ENCODE measurements at regions of chr12 and their contacts with region 1.

Region 1: GRCh38 chr12:76586764-76587395 is 27.3 kb upstream of the OSBPL8 start:
- DNase-seq: peak in 4 of 5 donors; percentile 59 to 63 (median 60)
- H3K4me3 ChIP-seq: no peak overlapping the region
- H3K4me3 Mint-ChIP-seq: no peak overlapping the region
- H3K27ac ChIP-seq: no peak overlapping the region
- H3K27ac Mint-ChIP-seq: peak overlapping the region in 2 of 7 donors; percentile 46 to 83
- H3K4me1 ChIP-seq: no peaks in the 10 kb centered on the region
- H3K4me1 Mint-ChIP-seq: peaks cover 0 to 3% (median 0%) of the 10 kb centered on the region in 4 donors
- H3K27me3 ChIP-seq: no peaks in the 10 kb centered on the region
- H3K27me3 Mint-ChIP-seq: no peaks in the 10 kb centered on the region

Region 2: GRCh38 chr12:75526655-75527511 is 1060.0 kb before region 1 on chr12:
- CTCF ChIA-PET with region 1: interaction called, 20 read pairs
- POLR2A ChIA-PET with region 1: no interaction called
- intact Hi-C with region 1: loop called (anchors 1 kb)
- DNase-seq: peak in 4 of 5 donors; percentile 32 to 42 (median 40)
- H3K4me3 ChIP-seq: no peak overlapping the region
- H3K4me3 Mint-ChIP-seq: no peak overlapping the region
- H3K27ac ChIP-seq: no peak overlapping the region
- H3K27ac Mint-ChIP-seq: no peak overlapping the region
- H3K4me1 ChIP-seq: no peaks in the 10 kb centered on the region
- H3K4me1 Mint-ChIP-seq: peaks cover 0 to 2% (median 0%) of the 10 kb centered on the region in 4 donors
- H3K27me3 ChIP-seq: no peaks in the 10 kb centered on the region
- H3K27me3 Mint-ChIP-seq: peaks cover 5 to 22% of the 10 kb centered on the region in 2 donors

Region 3: DNA sequence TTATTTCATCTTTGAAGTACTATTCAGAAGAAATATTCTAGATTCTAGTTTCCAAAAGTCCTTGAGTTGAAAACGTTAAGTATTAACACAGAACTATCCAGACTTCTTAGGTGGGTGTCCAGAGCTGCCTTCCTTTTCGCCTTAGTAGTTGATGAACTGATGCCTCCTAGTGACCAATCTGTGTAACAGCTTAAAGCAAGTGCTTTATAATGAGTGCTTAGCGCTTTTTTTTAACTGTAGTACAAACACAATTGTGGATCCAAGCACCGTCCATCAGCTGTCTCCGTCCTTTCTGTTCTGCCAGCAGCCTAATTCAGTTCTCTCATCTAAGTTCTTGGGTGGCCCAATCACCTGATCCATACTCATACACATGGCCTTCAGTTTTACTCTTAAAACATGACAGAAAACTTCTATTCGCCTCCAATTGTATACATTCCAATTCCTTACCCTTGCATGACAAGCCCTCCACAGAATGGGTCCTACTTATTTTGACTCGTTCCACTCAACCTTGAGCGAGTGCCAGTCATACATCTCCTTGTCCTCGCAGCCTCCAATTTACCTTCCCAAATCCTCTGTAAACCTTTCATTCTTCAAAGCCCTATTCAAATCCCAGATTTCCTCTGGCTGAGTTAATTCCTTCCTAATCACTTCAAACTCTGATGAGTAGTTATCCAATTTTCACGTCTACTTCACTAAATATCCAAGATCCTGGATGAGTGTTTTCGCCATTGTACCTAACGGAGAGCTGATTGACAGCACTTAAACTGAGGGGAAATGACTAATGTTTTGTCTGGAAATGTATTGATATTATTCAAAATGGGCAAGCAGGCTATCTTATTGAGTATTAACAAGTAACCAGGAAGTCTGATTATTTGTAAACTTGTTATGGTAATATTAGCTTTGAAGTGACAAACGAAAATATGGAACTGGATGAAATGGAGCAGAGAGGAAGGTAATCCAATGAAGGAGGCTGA is 549.5 kb before region 1 on chr12:
- CTCF ChIA-PET with region 1: interaction called, 4 read pairs
- POLR2A ChIA-PET with region 1: no interaction called
- intact Hi-C with region 1: loop called (anchors 1 kb)
- DNase-seq: peak; percentile 60 to 66 (median 64)
- H3K4me3 ChIP-seq: no peak overlapping the region
- H3K4me3 Mint-ChIP-seq: no peak overlapping the region
- H3K27ac ChIP-seq: no peak overlapping the region
- H3K27ac Mint-ChIP-seq: peak overlapping the region in 5 of 7 donors; percentile 0 to 68 (median 6)
- H3K4me1 ChIP-seq: peaks cover 5% of the 10 kb centered on the region
- H3K4me1 Mint-ChIP-seq: peaks cover 10 to 17% (median 13%) of the 10 kb centered on the region in 4 donors
- H3K27me3 ChIP-seq: no peaks in the 10 kb centered on the region
- H3K27me3 Mint-ChIP-seq: no peaks in the 10 kb centered on the region

Region 4: DNA sequence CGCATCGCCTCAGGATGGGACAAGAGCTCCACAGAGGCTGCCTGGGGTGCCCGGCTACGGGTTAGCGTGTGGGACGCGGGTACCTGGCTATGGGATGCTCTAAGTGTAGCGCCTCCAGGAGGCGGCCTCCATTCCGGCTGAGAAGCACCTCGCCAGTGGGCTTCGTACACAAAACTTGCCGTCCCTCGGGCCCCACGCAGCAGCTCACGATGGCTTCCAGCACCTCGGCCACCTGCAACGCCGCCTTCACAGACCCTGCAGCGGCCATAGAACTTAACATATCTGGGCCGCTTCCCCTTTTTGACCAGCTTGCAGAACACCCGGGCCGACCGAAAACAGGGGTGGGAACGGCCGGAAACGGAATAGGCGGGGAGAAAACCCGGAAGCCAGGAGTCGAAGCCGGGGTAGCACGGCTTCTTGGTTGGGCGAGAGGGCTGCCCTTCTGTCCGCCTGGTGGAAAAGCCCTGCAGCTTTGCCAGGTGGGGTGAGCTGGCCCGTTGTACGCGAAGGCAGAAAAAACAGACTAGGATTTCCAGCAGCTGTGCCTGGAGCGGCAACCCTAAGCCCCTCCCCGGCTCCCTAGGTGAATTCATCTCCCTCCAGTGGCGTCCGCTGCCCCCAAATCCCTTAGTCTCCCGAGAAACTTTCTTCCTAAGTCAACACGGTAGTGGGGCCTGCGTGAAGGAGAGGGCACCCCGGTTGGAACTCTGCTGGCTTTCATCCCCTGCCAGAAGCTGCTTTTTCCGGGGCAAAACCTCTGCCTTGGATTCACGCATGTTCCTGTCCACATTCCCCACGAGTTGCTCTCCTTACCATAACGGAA is 238.6 kb before region 1 on chr12 and contains the start of gene BBS10:
- CTCF ChIA-PET with region 1: interaction called, 6 read pairs
- POLR2A ChIA-PET with region 1: no interaction called
- intact Hi-C with region 1: loop called (anchors 2 kb)
- DNase-seq: peak; percentile 83 to 89 (median 85)
- H3K4me3 ChIP-seq: peak within 1 kb of the TSS; percentile 64 to 82
- H3K4me3 Mint-ChIP-seq: peak within 1 kb of the TSS; percentile 95 to 99 (median 96)
- H3K27ac ChIP-seq: peak within 1 kb of the TSS; percentile 63
- H3K27ac Mint-ChIP-seq: peak within 1 kb of the TSS; percentile 90 to 97 (median 94)
- H3K4me1 ChIP-seq: peaks cover 23% of the 10 kb centered on the region
- H3K4me1 Mint-ChIP-seq: peaks cover 13 to 43% (median 23%) of the 10 kb centered on the region in 4 donors
- H3K27me3 ChIP-seq: no peaks in the 10 kb centered on the region
- H3K27me3 Mint-ChIP-seq: no peaks in the 10 kb centered on the region
- total RNA-seq, gene BBS10: 11.5 to 12.6 TPM

Region 5: DNA sequence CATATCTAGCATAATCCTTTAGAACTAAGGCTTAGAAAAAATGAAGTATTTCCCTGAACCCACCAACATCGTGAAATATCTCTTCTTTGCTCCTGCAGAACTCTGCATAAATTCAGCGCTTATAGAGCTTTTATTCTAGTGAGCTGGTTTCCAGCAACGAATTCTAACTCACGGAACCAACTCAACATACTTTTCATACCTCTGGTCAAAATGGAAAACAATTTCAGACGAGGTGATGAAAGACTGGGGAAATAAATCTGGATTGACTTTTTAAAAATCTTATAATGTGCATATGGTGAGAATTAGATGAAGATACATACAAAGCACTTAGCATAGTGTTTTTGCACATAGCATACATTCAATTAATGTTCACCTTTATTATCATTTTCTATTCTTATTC is 176.1 kb before region 1 on chr12:
- CTCF ChIA-PET with region 1: interaction called, 10 read pairs
- POLR2A ChIA-PET with region 1: no interaction called
- intact Hi-C with region 1: no loop called
- DNase-seq: no peak
- H3K4me3 ChIP-seq: no peak overlapping the region
- H3K4me3 Mint-ChIP-seq: no peak overlapping the region
- H3K27ac ChIP-seq: no peak overlapping the region
- H3K27ac Mint-ChIP-seq: no peak overlapping the region
- H3K4me1 ChIP-seq: no peaks in the 10 kb centered on the region
- H3K4me1 Mint-ChIP-seq: peaks cover 6 to 18% (median 10%) of the 10 kb centered on the region in 4 donors
- H3K27me3 ChIP-seq: no peaks in the 10 kb centered on the region
- H3K27me3 Mint-ChIP-seq: no peaks in the 10 kb centered on the region

Region 6: GRCh38 chr12:76428117-76428516 is 158.8 kb before region 1 on chr12:
- CTCF ChIA-PET with region 1: no interaction called
- POLR2A ChIA-PET with region 1: no interaction called
- intact Hi-C with region 1: no loop called
- DNase-seq: no peak
- H3K4me3 ChIP-seq: no peak overlapping the region
- H3K4me3 Mint-ChIP-seq: no peak overlapping the region
- H3K27ac ChIP-seq: no peak overlapping the region
- H3K27ac Mint-ChIP-seq: no peak overlapping the region
- H3K4me1 ChIP-seq: no peaks in the 10 kb centered on the region
- H3K4me1 Mint-ChIP-seq: peaks cover 20 to 33% (median 29%) of the 10 kb centered on the region in 4 donors
- H3K27me3 ChIP-seq: no peaks in the 10 kb centered on the region
- H3K27me3 Mint-ChIP-seq: no peaks in the 10 kb centered on the region

Region 7: DNA sequence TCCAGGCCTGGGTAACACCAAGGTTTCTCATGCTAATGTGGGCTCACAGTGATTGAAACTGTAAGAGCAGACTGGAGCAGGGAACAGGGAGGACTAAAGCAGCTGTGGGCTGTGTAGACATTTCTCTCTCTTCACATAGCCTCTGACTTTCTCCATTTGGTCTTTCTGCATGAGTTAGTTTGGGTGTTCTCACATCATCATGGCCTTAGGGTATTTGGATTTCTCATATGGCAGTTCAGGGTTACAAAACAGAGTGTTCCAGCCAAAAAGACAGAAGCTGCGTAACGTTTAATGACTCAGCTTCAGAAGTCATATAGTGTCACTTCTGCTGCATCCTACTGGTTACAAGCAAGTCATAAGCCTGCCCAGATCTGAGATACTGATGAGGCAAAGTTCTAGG is 24.7 kb after region 1 on chr12:
- CTCF ChIA-PET with region 1: no interaction called
- POLR2A ChIA-PET with region 1: no interaction called
- intact Hi-C with region 1: no loop called
- DNase-seq: no peak
- H3K4me3 ChIP-seq: no peak overlapping the region
- H3K4me3 Mint-ChIP-seq: no peak overlapping the region
- H3K27ac ChIP-seq: no peak overlapping the region
- H3K27ac Mint-ChIP-seq: no peak overlapping the region
- H3K4me1 ChIP-seq: no peaks in the 10 kb centered on the region
- H3K4me1 Mint-ChIP-seq: no peaks in the 10 kb centered on the region
- H3K27me3 ChIP-seq: no peaks in the 10 kb centered on the region
- H3K27me3 Mint-ChIP-seq: peaks cover 0 to 9% of the 10 kb centered on the region in 2 donors